Left ventricle myocardium inferior (tissue), 1 donor: ENCODE measurements at regions of chr3 and their contacts with region 1.

Region 1: DNA sequence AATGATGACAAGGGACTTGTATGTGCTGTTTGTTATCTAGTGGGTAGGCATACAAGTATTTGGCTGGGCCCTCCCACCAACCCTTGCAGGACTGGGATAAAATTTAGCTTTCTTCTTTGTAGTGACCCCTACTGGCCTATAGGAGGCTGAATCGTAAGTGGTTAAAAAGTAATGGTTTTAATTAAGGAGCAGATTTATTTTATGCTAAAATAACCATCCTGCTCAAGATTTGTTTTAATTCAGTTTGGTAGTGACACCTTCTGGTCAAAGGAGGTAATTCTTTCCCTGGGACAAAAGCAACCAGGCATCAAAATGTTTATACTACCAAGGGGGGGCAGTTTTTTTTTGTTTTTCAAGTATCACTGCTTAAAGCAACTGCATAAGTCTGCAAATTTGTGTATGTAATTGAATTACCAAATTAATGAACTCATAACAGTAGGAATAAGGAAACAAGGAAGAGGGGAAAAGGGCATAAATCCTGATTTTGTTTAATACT is 70.7 kb downstream of the TOP2B start:
- DNase-seq: no peak
- H3K4me3 ChIP-seq: no peak overlapping the region
- H3K27ac ChIP-seq: peak overlapping the region; percentile 80
- H3K4me1 ChIP-seq: peaks cover 84% of the 10 kb centered on the region
- H3K27me3 ChIP-seq: no peaks in the 10 kb centered on the region
- CTCF ChIP-seq: peak; percentile 86

Region 2: DNA sequence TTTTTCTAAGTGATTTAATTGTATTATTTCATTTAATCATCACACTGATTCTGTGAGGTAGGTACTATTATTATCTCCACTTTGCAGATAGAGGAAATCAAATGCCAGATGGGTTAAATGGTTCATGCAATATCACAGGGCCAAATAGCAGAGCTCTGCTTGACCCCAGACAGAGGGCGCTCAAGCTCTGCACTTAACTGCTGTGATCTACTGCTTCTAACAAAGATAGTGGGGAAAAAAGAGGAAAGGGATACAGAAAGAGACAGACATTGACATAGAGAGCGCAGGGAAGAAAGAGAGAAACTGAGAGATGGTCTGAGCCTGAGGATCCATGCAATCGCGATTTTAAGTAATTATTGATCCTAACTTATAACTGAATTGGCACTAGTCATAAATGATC is 820.3 kb before region 1 on chr3:
- intact Hi-C with region 1: loop called (anchors 5 kb)
- DNase-seq: peak; percentile 15
- H3K4me3 ChIP-seq: no peak overlapping the region
- H3K27ac ChIP-seq: no peak overlapping the region
- H3K4me1 ChIP-seq: no peaks in the 10 kb centered on the region
- H3K27me3 ChIP-seq: no peaks in the 10 kb centered on the region
- CTCF ChIP-seq: peak; percentile 85

Region 3: GRCh38 chr3:24963762-24964625 is 630.1 kb before region 1 on chr3:
- intact Hi-C with region 1: loop called (anchors 10 kb)
- DNase-seq: no peak
- H3K4me3 ChIP-seq: no peak overlapping the region
- H3K27ac ChIP-seq: no peak overlapping the region
- H3K4me1 ChIP-seq: peaks cover 5% of the 10 kb centered on the region
- H3K27me3 ChIP-seq: no peaks in the 10 kb centered on the region
- CTCF ChIP-seq: peak; percentile 74

Region 4: DNA sequence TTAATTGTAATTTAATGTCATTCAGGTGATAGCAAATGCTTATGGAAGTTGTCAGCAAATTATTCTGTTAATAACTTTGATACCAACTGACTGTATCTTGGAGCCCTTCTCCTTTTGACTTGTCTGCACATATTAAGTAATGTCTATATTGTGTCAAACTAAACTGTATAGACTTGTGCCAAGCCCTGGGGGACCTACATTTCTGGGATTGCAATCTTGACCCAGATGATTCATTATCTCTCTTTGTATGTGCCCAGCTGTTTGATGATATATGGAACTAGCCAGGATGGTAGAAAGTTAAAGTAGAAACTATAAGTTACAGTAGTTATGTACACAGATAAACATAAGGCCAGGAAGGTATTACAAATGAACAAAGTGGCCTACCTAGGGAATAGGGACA is 568.8 kb before region 1 on chr3:
- intact Hi-C with region 1: loop called (anchors 2 kb)
- DNase-seq: no peak
- H3K4me3 ChIP-seq: no peak overlapping the region
- H3K27ac ChIP-seq: no peak overlapping the region
- H3K4me1 ChIP-seq: no peaks in the 10 kb centered on the region
- H3K27me3 ChIP-seq: no peaks in the 10 kb centered on the region
- CTCF ChIP-seq: no peak

Region 5: GRCh38 chr3:25293731-25294130 is 300.3 kb before region 1 on chr3:
- intact Hi-C with region 1: no loop called
- DNase-seq: no peak
- H3K4me3 ChIP-seq: no peak overlapping the region
- H3K27ac ChIP-seq: no peak overlapping the region
- H3K4me1 ChIP-seq: no peaks in the 10 kb centered on the region
- H3K27me3 ChIP-seq: no peaks in the 10 kb centered on the region
- CTCF ChIP-seq: no peak

Region 6: DNA sequence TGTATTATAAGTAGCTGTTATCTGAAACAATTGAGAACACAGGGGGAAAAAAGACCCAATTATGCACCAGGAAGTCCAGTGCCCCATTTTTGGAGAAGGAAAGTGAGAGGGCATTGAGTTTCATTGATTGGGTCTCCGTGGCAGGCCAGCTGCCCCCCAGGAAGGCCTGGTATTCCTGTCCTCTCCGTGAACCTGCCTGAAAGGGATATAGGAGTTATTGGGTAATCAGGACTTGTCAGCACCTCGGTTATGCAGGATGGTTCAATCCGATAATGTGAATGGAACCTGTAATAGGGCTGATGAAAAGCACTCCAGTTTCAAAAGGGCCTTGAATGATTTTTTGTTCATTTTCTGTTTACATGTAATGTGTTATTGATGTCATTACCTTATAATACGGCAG is 288.0 kb before region 1 on chr3:
- intact Hi-C with region 1: loop called (anchors 10 kb)
- DNase-seq: no peak
- H3K4me3 ChIP-seq: no peak overlapping the region
- H3K27ac ChIP-seq: no peak overlapping the region
- H3K4me1 ChIP-seq: no peaks in the 10 kb centered on the region
- H3K27me3 ChIP-seq: no peaks in the 10 kb centered on the region
- CTCF ChIP-seq: no peak

Region 7: GRCh38 chr3:25427942-25428788 is 165.9 kb before region 1 on chr3 and contains the start of gene RARB:
- intact Hi-C with region 1: loop called (anchors 5 kb)
- DNase-seq: peak; percentile 68
- H3K4me3 ChIP-seq: peak within 1 kb of the TSS; percentile 83
- H3K27ac ChIP-seq: peak within 1 kb of the TSS; percentile 96
- H3K4me1 ChIP-seq: peaks cover 67% of the 10 kb centered on the region
- H3K27me3 ChIP-seq: no peaks in the 10 kb centered on the region
- CTCF ChIP-seq: no peak
- total RNA-seq, gene RARB: 15.6 TPM

Region 8: DNA sequence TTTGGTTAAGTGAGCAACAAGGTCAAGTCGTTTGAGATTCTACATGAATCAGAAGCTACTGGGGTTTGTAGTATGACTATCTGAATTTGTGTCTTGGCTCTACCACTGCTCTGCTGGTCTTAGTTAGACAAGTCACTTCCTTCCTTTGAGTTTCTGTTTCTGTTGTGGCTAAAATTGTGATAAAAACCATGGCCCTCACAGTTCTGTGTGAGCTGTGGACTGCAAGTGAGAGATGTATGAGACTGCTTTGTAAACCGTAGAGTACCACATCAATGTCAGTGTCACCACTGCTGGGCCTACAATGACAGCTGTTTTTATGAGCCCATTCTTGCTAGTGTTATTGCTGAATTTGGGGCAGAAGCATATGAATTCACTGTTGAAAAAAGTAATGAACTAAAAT is 133.3 kb before region 1 on chr3:
- intact Hi-C with region 1: no loop called
- DNase-seq: no peak
- H3K4me3 ChIP-seq: no peak overlapping the region
- H3K27ac ChIP-seq: peak overlapping the region; percentile 2
- H3K4me1 ChIP-seq: peaks cover 90% of the 10 kb centered on the region
- H3K27me3 ChIP-seq: no peaks in the 10 kb centered on the region
- CTCF ChIP-seq: no peak

Region 9: GRCh38 chr3:26068890-26069289 is 474.8 kb after region 1 on chr3:
- intact Hi-C with region 1: no loop called
- DNase-seq: peak; percentile 48
- H3K4me3 ChIP-seq: no peak overlapping the region
- H3K27ac ChIP-seq: peak overlapping the region; percentile 73
- H3K4me1 ChIP-seq: peaks cover 12% of the 10 kb centered on the region
- H3K27me3 ChIP-seq: no peaks in the 10 kb centered on the region
- CTCF ChIP-seq: no peak